Breast epithelium (tissue), 4 donors: ENCODE measurements at regions of chr9 and their contacts with region 1.

Region 1: GRCh38 chr9:132752877-132753592 is 82.8 kb downstream of the GTF3C4 start:
- DNase-seq: no peak
- H3K4me3 ChIP-seq: no peak overlapping the region
- H3K27ac ChIP-seq: no peak overlapping the region
- H3K4me1 ChIP-seq: no peaks in the 10 kb centered on the region
- H3K27me3 ChIP-seq: no peaks in the 10 kb centered on the region
- CTCF ChIP-seq: no peak
- POLR2A ChIP-seq: no peak

Region 2: GRCh38 chr9:132694157-132694556 is 58.9 kb before region 1 on chr9:
- intact Hi-C with region 1: loop called (anchors 2 kb)
- DNase-seq: no peak
- H3K4me3 ChIP-seq: no peak overlapping the region
- H3K27ac ChIP-seq: no peak overlapping the region
- H3K4me1 ChIP-seq: no peaks in the 10 kb centered on the region
- H3K27me3 ChIP-seq: no peaks in the 10 kb centered on the region
- CTCF ChIP-seq: no peak
- POLR2A ChIP-seq: no peak

Region 3: GRCh38 chr9:132768932-132769905 is 16.2 kb after region 1 on chr9:
- intact Hi-C with region 1: no loop called
- DNase-seq: no peak
- H3K4me3 ChIP-seq: peak overlapping the region; percentile 79 to 90 (median 81)
- H3K27ac ChIP-seq: peak overlapping the region; percentile 84 to 86
- H3K4me1 ChIP-seq: no peaks in the 10 kb centered on the region
- H3K27me3 ChIP-seq: no peaks in the 10 kb centered on the region
- CTCF ChIP-seq: no peak
- POLR2A ChIP-seq: no peak

Region 4: DNA sequence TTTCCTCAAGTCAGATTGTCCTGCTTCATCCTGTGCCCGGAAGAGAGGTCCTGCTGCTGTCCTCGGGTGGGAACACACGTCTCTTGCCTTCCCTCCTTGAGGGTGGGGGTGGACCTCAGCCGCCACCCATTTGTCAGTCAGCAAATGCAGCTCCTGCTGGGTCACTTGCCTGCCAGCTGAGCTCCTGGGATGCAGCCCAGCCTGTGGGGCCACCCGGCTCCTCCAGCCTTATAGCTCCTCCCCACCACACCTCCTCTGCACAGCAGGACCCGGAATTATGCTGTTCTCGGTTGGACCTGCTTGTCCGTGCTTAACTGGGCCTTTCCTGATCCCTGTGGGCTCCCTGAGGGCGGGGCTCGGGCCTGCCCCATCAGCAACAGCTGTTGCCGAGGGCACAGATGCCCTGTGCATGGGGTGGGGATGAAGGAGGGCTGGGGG is 1625.9 kb after region 1 on chr9:
- intact Hi-C with region 1: loop called (anchors 10 kb)
- DNase-seq: peak in 1 of 2 donors; percentile 61
- H3K4me3 ChIP-seq: peak overlapping the region in 1 of 3 donors; percentile 27
- H3K27ac ChIP-seq: peak overlapping the region; percentile 91 to 97
- H3K4me1 ChIP-seq: peaks cover 53 to 60% of the 10 kb centered on the region in 2 donors
- H3K27me3 ChIP-seq: no peaks in the 10 kb centered on the region
- CTCF ChIP-seq: no peak
- POLR2A ChIP-seq: no peak